GM12878 (cell line): ENCODE measurements at regions of chr4 and their contacts with region 1.

Region 1: GRCh38 chr4:136650541-136651277 is 881.6 kb downstream of the PCDH18 start:
- DNase-seq: peak; percentile 34
- ATAC-seq: peak; percentile 87
- H3K4me3 ChIP-seq: no peak overlapping the region
- H3K27ac ChIP-seq: no peak overlapping the region
- H3K4me1 ChIP-seq: no peaks in the 10 kb centered on the region
- H3K27me3 ChIP-seq: no peaks in the 10 kb centered on the region
- CTCF ChIP-seq: no peak
- EP300 ChIP-seq: peak; percentile 43 to 61; a peak in 2 of 4 replicates
- POLR2A ChIP-seq: no peak
- RAD21 ChIP-seq: no peak

Region 2: GRCh38 chr4:136485006-136485405 is 165.7 kb before region 1 on chr4:
- CTCF ChIA-PET with region 1: no interaction called
- POLR2A ChIA-PET with region 1: no interaction called
- RAD21 ChIA-PET with region 1: no interaction called
- SMC1A ChIA-PET with region 1: no interaction called
- in situ Hi-C with region 1: no loop called
- intact Hi-C with region 1: no loop called
- DNase-seq: no peak
- ATAC-seq: no peak
- H3K4me3 ChIP-seq: no peak overlapping the region
- H3K27ac ChIP-seq: no peak overlapping the region
- H3K4me1 ChIP-seq: no peaks in the 10 kb centered on the region
- H3K27me3 ChIP-seq: no peaks in the 10 kb centered on the region
- CTCF ChIP-seq: no peak
- EP300 ChIP-seq: no peak
- POLR2A ChIP-seq: no peak
- RAD21 ChIP-seq: no peak

Region 3: GRCh38 chr4:136637071-136637777 is 13.5 kb before region 1 on chr4:
- CTCF ChIA-PET with region 1: interaction called, 16 read pairs
- POLR2A ChIA-PET with region 1: interaction called, 5 read pairs
- RAD21 ChIA-PET with region 1: interaction called, 11 read pairs
- SMC1A ChIA-PET with region 1: interaction called, 56 read pairs
- in situ Hi-C with region 1: no loop called
- intact Hi-C with region 1: no loop called
- DNase-seq: no peak
- ATAC-seq: peak; percentile 69
- H3K4me3 ChIP-seq: no peak overlapping the region
- H3K27ac ChIP-seq: no peak overlapping the region
- H3K4me1 ChIP-seq: no peaks in the 10 kb centered on the region
- H3K27me3 ChIP-seq: no peaks in the 10 kb centered on the region
- CTCF ChIP-seq: peak; percentile 40 to 53 (median 45); a peak in 5 of 6 replicates
- EP300 ChIP-seq: no peak
- POLR2A ChIP-seq: no peak
- RAD21 ChIP-seq: peak; percentile 44

Region 4: DNA sequence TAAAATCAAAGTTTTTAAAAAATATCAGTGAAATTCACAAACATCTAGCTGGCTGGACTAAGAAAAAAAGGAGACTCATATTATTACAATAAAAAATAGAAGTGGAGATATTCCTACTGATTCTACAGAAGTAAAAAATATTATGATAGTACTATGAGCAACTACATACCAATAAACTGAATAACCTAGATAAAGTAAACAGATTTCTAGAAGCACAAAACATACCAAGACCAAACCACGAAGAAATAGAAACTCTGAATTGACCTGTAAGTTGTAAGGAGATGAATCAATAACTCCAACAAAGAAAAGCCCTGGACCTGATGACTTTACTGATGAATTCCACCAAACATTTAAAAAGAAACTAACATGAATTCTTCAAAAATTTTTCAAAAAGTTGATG is 14.3 kb after region 1 on chr4:
- CTCF ChIA-PET with region 1: interaction called, 4 read pairs
- POLR2A ChIA-PET with region 1: interaction called, 3 read pairs
- RAD21 ChIA-PET with region 1: interaction called, 6 read pairs
- SMC1A ChIA-PET with region 1: interaction called, 29 read pairs
- in situ Hi-C with region 1: no loop called
- intact Hi-C with region 1: no loop called
- DNase-seq: no peak
- ATAC-seq: no peak
- H3K4me3 ChIP-seq: no peak overlapping the region
- H3K27ac ChIP-seq: no peak overlapping the region
- H3K4me1 ChIP-seq: no peaks in the 10 kb centered on the region
- H3K27me3 ChIP-seq: no peaks in the 10 kb centered on the region
- CTCF ChIP-seq: no peak
- EP300 ChIP-seq: no peak
- POLR2A ChIP-seq: no peak
- RAD21 ChIP-seq: no peak

Region 5: GRCh38 chr4:136680271-136680670 is 29.6 kb after region 1 on chr4:
- CTCF ChIA-PET with region 1: interaction called, 8 read pairs
- POLR2A ChIA-PET with region 1: interaction called, 4 read pairs
- RAD21 ChIA-PET with region 1: interaction called, 17 read pairs
- SMC1A ChIA-PET with region 1: interaction called, 29 read pairs
- in situ Hi-C with region 1: no loop called
- intact Hi-C with region 1: no loop called
- DNase-seq: no peak
- ATAC-seq: no peak
- H3K4me3 ChIP-seq: no peak overlapping the region
- H3K27ac ChIP-seq: no peak overlapping the region
- H3K4me1 ChIP-seq: no peaks in the 10 kb centered on the region
- H3K27me3 ChIP-seq: no peaks in the 10 kb centered on the region; a peak in 1 of 4 replicates
- CTCF ChIP-seq: no peak
- EP300 ChIP-seq: no peak
- POLR2A ChIP-seq: no peak
- RAD21 ChIP-seq: no peak

Region 6: GRCh38 chr4:136687118-136687517 is 36.4 kb after region 1 on chr4:
- CTCF ChIA-PET with region 1: interaction called, 8 read pairs
- POLR2A ChIA-PET with region 1: interaction called, 3 read pairs
- RAD21 ChIA-PET with region 1: interaction called, 17 read pairs
- SMC1A ChIA-PET with region 1: interaction called, 29 read pairs
- in situ Hi-C with region 1: no loop called
- intact Hi-C with region 1: no loop called
- DNase-seq: no peak
- ATAC-seq: peak; percentile 49
- H3K4me3 ChIP-seq: no peak overlapping the region
- H3K27ac ChIP-seq: no peak overlapping the region
- H3K4me1 ChIP-seq: no peaks in the 10 kb centered on the region
- H3K27me3 ChIP-seq: no peaks in the 10 kb centered on the region; a peak in 1 of 4 replicates
- CTCF ChIP-seq: peak in 2 of 3 experiments; percentile 18 to 21; a peak in 2 of 6 replicates
- EP300 ChIP-seq: no peak
- POLR2A ChIP-seq: no peak
- RAD21 ChIP-seq: no peak

Region 7: DNA sequence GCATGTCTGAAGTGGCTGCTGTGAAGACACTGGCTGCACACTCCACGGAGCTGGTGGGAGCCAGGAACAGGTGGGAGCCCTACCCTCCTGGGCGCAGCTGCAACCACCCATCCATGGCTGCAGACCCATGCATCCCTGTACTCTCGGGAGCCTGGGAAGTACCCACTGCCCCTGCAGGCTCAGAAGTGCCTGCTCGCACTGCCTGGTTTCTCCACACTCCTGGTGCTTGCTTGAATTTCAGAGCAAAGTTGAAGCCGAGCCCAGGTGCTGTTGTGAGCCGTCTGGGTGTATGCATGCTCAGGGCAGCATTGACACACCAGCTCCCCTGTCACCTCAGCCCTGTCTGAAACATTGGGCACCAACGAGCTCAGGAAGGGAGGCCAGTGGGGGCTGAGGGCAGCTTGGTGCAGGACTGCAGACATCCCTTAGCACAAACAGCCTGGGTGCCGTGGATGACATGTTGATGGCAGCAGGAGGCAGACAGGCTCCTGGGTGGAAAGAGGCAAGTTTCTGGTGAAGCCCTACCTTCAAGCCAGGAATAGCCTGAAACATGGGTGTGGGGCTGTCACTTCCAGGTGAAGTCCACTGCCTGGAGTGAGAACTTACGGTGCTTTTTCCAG is 295.7 kb after region 1 on chr4:
- CTCF ChIA-PET with region 1: no interaction called
- POLR2A ChIA-PET with region 1: no interaction called
- RAD21 ChIA-PET with region 1: no interaction called
- SMC1A ChIA-PET with region 1: no interaction called
- in situ Hi-C with region 1: no loop called
- intact Hi-C with region 1: no loop called
- DNase-seq: no peak
- ATAC-seq: no peak
- H3K4me3 ChIP-seq: no peak overlapping the region
- H3K27ac ChIP-seq: no peak overlapping the region
- H3K4me1 ChIP-seq: no peaks in the 10 kb centered on the region
- H3K27me3 ChIP-seq: no peaks in the 10 kb centered on the region
- CTCF ChIP-seq: no peak
- EP300 ChIP-seq: no peak
- POLR2A ChIP-seq: no peak
- RAD21 ChIP-seq: no peak